ENCODE measurements at regions of chr20 and their contacts with region 1.

Region 1: GRCh38 chr20:64038565-64039292 is 2.7 kb downstream of the C20orf204 start:
- DNase-seq: peak; percentile 84
- ATAC-seq: peak; percentile 67
- H3K4me3 Mint-ChIP-seq: peak overlapping the region; percentile 54
- H3K27ac Mint-ChIP-seq: no peak overlapping the region
- H3K4me1 Mint-ChIP-seq: peaks cover 55% of the 10 kb centered on the region
- H3K27me3 Mint-ChIP-seq: peaks cover 2% of the 10 kb centered on the region
- CTCF ChIP-seq: peak; percentile 86

Region 2: DNA sequence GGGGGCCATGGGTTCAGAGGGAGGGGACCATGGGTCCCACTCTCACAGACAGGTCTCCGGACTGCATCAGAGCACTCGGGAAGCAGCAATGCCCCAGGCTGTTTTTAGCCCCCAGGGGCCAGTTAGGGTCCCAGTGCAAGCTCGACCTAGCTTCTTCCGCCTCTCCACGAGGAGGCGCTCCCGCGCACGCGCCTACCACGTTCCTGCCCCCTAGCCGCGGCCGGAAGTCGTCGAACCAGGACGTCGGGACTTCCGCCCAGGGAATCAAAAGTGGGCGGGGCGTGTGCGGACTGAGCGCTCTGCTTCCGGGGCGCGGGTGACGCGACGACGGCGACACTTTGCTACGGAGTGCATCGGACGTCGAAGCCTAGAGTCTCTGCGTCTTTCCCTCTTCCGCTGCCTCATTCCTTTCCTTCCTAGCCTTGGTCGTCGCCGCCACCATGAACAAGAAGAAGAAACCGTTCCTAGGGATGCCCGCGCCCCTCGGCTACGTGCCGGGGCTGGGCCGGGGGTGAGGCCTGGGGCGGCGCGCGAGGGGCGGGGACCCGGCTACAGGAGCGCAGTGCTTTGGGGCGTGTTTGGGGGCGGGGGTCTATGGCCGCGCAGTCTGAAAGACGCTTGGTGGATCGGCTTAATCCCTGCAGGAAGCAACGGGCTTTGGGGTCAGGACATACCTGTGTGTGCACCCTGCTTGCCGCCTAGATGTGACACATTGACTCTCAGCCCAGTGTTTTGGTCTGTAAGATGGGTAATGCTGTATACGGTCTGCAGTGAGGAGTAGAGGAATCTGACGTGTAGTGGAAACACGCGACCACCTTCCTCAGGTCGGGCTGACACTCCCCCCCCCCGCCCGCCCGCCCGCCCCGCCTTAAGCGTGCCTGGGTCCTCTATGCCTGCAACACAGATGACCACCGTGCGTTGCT is 57.7 kb before region 1 on chr20 and contains the start of gene PRPF6:
- CTCF ChIA-PET with region 1: interaction called, 88 read pairs
- POLR2A ChIA-PET with region 1: interaction called, 51 read pairs
- intact Hi-C with region 1: loop called (anchors 10 kb)
- DNase-seq: peak; percentile 96
- ATAC-seq: peak; percentile 55
- H3K4me3 Mint-ChIP-seq: peak within 1 kb of the TSS; percentile 87
- H3K27ac Mint-ChIP-seq: peak within 1 kb of the TSS; percentile 98
- H3K4me1 Mint-ChIP-seq: peaks cover 60% of the 10 kb centered on the region
- H3K27me3 Mint-ChIP-seq: no peaks in the 10 kb centered on the region
- CTCF ChIP-seq: peak; percentile 87
- total RNA-seq, gene PRPF6: 53.0 to 55.5 TPM

Region 3: DNA sequence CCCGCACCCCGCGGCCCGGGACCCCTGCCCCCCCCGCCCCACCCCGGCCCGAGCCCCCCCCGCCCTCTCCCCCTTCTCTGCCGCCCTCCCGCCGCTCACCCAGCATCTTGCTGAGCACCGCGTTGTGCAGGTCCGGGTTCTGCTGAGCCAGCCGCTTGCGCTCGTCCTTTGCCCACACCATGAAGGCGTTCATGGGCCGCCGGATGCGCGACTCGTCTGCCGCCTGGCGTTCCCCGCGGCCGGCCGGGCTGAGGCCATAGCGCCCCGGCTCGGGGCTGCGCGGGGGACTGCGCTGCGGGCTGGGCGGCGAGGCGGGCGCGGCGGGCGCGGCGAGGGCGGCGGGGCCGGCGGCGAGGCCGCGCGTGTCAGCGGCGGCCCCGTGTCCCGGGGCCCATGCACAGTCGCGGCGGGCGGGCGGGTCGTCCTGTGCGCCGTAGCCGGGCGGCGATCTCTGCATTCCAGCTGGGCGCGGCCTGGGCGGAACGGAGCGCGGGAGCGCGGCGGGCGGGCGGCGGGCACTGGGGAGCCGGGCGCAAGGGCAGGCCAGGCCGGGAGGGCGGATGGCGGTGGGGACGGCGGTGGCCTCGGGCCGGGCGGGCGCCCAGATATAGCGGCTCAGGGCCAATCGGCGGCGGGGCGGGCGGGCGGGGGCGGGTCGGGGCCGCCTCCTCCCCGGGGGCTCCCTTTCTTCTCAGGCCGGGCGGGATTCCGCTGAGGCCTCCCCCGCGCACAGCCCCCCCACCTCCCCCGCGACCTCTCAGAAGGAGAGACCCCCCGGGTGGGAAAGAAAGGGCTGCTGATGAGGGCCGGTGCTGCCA is 10.5 kb after region 1 on chr20 and contains the start of gene SOX18:
- CTCF ChIA-PET with region 1: interaction called, 14 read pairs
- POLR2A ChIA-PET with region 1: interaction called, 10 read pairs
- intact Hi-C with region 1: no loop called
- DNase-seq: peak; percentile 58
- ATAC-seq: peak; percentile 60
- H3K4me3 Mint-ChIP-seq: no peak within 1 kb of the TSS
- H3K27ac Mint-ChIP-seq: no peak within 1 kb of the TSS
- H3K4me1 Mint-ChIP-seq: peaks cover 10% of the 10 kb centered on the region
- H3K27me3 Mint-ChIP-seq: peaks cover 48% of the 10 kb centered on the region
- CTCF ChIP-seq: no peak
- total RNA-seq, gene SOX18: not detected

Region 4: GRCh38 chr20:64062596-64063388 is 24.1 kb after region 1 on chr20 and contains the start of gene TCEA2:
- CTCF ChIA-PET with region 1: interaction called, 47 read pairs
- POLR2A ChIA-PET with region 1: interaction called, 7 read pairs
- intact Hi-C with region 1: no loop called
- DNase-seq: peak; percentile 98
- ATAC-seq: peak; percentile 83
- H3K4me3 Mint-ChIP-seq: peak within 1 kb of the TSS; percentile 89
- H3K27ac Mint-ChIP-seq: peak within 1 kb of the TSS; percentile 76
- H3K4me1 Mint-ChIP-seq: peaks cover 40% of the 10 kb centered on the region
- H3K27me3 Mint-ChIP-seq: no peaks in the 10 kb centered on the region
- CTCF ChIP-seq: no peak
- total RNA-seq, gene TCEA2: 30.0 to 33.0 TPM

Region 5: GRCh38 chr20:64079273-64080012 is 40.7 kb after region 1 on chr20 and contains the start of gene RGS19:
- CTCF ChIA-PET with region 1: interaction called, 20 read pairs
- POLR2A ChIA-PET with region 1: interaction called, 3 read pairs
- intact Hi-C with region 1: no loop called
- DNase-seq: peak; percentile 75
- ATAC-seq: peak; percentile 11
- H3K4me3 Mint-ChIP-seq: peak within 1 kb of the TSS; percentile 84
- H3K27ac Mint-ChIP-seq: peak within 1 kb of the TSS; percentile 65
- H3K4me1 Mint-ChIP-seq: peaks cover 24% of the 10 kb centered on the region
- H3K27me3 Mint-ChIP-seq: peaks cover 3% of the 10 kb centered on the region
- CTCF ChIP-seq: peak; percentile 11
- total RNA-seq, gene RGS19: 42.5 to 44.1 TPM

Region 6: DNA sequence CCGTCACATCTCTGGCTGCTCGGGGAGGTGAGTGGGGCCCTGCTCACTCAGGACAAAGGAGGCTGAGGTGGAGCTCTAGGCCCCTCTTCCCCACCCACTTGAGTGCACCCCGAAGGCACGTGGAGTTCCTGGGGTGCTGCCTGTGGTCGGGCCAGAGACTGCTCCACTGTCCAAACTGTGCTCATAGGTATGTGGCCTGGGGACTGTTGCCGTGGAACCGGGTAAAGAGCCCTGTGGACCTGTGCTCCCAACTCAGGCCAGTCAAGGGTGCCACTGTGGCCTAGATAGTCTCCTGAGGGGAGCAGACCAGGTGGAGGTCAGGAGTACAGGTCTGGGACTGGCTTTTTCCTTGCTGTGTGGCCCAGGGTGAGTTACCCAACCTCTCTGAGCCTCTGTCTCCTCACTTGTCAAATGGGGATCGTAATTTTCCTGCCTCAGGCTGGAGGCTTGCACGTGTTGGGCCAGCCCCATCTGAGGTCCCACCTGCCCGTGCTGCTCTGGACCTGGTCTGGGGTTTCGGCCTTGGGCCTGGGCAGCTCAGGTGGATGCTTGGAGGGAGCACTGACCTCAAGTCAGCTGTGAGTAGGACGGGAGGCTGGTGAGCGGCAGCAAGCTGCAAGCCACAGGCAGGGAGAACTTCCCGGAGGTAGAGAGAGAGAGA is 81.1 kb after region 1 on chr20:
- CTCF ChIA-PET with region 1: interaction called, 16 read pairs
- POLR2A ChIA-PET with region 1: interaction called, 3 read pairs
- intact Hi-C with region 1: no loop called
- DNase-seq: peak; percentile 15
- ATAC-seq: peak; percentile 17
- H3K4me3 Mint-ChIP-seq: peak overlapping the region; percentile 51
- H3K27ac Mint-ChIP-seq: peak overlapping the region; percentile 80
- H3K4me1 Mint-ChIP-seq: peaks cover 9% of the 10 kb centered on the region
- H3K27me3 Mint-ChIP-seq: peaks cover 7% of the 10 kb centered on the region
- CTCF ChIP-seq: no peak

Region 7: GRCh38 chr20:64131406-64131805 is 92.7 kb after region 1 on chr20:
- CTCF ChIA-PET with region 1: no interaction called
- POLR2A ChIA-PET with region 1: no interaction called
- intact Hi-C with region 1: no loop called
- DNase-seq: peak; percentile 23
- ATAC-seq: peak; percentile 71
- H3K4me3 Mint-ChIP-seq: no peak overlapping the region
- H3K27ac Mint-ChIP-seq: no peak overlapping the region
- H3K4me1 Mint-ChIP-seq: no peaks in the 10 kb centered on the region
- H3K27me3 Mint-ChIP-seq: peaks cover 12% of the 10 kb centered on the region
- CTCF ChIP-seq: no peak

Region 8: DNA sequence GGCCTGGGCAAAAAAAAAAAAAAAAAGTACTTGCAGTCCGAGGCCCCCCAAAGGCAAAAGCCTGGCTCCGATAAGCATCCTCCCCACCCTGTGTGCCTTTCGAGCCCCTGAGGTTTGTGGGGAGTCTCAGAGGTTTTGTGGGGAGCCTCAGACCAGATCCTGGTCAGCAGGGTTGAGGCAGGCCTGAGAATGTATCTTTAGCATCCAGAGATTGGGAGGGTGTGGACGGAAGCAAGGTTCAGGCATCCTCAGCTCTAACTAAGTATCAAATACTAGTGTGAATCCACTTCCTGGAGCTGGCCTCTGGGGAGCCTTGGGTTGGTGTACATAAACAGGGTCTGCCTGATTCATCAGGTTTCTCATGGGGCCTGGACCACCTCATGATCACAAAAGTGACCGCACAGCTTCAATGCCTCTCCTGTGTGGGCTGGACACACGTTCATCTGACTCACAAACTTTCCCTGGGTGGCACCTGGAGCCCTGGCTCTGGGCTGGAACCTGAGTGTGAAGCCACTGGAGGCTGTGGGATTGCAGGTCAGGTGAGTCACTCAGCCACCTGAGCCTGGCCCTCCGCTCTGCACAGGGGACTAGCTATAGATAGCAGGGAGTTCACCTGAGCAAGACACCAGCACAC is 241.2 kb after region 1 on chr20:
- CTCF ChIA-PET with region 1: no interaction called
- POLR2A ChIA-PET with region 1: no interaction called
- intact Hi-C with region 1: no loop called
- DNase-seq: peak; percentile 25
- ATAC-seq: peak; percentile 34
- H3K4me3 Mint-ChIP-seq: no peak overlapping the region
- H3K27ac Mint-ChIP-seq: no peak overlapping the region
- H3K4me1 Mint-ChIP-seq: peaks cover 17% of the 10 kb centered on the region
- H3K27me3 Mint-ChIP-seq: no peaks in the 10 kb centered on the region
- CTCF ChIP-seq: no peak